WTC11 (cell line): ENCODE measurements at regions of chr2 and their contacts with region 1.

Region 1: DNA sequence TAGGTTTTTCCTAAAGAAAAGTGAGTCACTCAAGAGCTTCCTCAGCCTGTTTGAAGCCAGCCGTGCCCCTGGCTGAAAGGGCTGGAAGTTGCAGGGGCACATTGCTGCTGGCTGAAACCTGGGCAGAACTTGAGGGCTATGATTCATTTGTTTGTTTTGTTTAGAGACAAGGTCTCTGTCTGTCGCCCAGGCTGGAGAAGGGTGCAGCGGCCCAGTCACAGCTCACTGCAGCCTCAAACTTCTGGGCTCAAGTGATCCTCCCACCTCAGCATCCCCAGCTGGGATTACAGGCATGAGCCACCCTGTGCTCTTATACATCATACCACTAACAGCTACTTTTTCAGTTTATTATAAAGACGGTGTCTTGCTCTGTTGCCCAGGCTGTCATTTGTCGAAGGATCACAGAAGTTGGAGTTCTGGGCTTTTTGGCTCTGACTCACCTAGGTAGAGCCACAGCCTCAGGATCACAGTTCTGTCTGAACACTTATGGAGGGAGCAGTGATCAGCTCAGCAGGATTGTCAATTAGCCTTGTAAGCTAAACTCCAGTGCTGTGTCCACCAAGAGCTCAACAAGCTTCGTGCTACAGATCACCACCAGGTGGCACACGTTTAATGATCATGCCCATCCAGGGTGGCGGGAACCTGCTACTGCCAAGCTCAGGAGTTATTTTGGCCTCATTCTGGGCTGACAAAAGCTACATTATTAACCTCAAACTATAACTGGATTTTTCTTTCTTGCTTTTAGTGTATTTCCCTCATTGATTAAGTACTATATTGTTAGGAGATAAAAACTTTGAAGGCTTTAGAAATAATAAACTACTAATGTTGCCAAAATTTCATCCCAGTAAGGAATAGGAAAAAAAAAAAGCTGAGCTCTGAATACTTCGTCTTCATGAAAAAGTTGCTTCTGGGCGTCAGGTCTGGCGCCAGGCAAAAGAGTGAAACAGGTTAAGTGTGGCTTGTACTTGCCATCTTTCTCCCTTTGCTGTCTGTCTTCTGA is 57.9 kb downstream of the ARHGEF33 start:
- DNase-seq: peak; percentile 82
- ATAC-seq: peak; percentile 92
- H3K4me3 Mint-ChIP-seq: no peak overlapping the region
- H3K27ac Mint-ChIP-seq: no peak overlapping the region
- H3K4me1 Mint-ChIP-seq: peaks cover 31% of the 10 kb centered on the region
- H3K27me3 Mint-ChIP-seq: peaks cover 2% of the 10 kb centered on the region; the same call in 1 of the 2 replicates
- CTCF ChIP-seq: peak; percentile 53

Region 2: DNA sequence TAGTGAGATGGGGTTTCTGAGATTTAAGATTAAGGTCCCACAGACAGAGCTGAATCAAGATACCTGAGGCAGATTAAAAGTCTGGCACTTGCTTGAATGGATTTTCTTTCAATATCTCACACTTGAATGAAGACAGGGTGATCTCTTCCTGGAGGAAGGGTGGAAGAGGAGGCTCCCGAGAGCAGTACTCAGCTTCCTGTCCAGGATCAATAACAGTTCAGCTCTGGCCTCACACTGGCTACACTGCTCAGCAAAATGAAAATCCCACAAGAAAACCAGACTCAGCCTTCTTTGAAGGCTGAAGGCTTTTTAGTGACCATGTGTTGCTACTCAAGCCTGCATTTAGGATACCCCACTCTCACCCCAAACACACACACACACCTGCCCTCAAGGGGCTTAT is 46.8 kb before region 1 on chr2:
- CTCF ChIA-PET with region 1: interaction called, 10 read pairs
- POLR2A ChIA-PET with region 1: no interaction called
- DNase-seq: no peak
- ATAC-seq: no peak
- H3K4me3 Mint-ChIP-seq: no peak overlapping the region
- H3K27ac Mint-ChIP-seq: no peak overlapping the region
- H3K4me1 Mint-ChIP-seq: no peaks in the 10 kb centered on the region
- H3K27me3 Mint-ChIP-seq: no peaks in the 10 kb centered on the region
- CTCF ChIP-seq: no peak

Region 3: DNA sequence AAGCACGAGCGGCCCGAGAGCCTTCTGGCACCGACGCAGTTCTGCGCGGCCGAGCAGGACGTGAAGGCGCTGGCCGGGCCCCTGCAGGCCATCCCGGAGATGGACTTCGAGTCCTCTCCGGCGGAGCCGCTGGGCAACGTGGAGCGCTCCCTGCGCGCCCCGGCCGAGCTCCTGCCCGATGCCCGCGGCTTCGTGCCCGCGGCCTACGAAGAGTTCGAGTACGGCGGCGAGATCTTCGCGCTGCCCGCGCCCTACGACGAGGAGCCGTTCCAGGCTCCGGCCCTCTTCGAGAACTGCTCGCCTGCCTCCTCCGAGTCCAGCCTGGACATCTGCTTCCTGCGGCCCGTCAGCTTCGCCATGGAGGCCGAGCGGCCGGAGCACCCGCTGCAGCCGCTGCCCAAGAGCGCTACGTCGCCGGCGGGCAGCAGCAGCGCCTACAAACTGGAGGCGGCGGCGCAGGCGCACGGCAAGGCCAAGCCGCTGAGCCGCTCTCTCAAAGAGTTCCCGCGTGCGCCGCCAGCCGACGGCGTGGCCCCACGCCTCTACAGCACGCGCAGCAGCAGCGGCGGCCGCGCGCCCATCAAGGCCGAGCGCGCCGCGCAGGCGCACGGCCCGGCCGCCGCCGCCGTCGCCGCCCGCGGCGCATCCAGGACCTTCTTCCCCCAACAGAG is 12.5 kb after region 1 on chr2:
- CTCF ChIA-PET with region 1: interaction called, 44 read pairs
- POLR2A ChIA-PET with region 1: no interaction called
- DNase-seq: peak; percentile 75
- ATAC-seq: peak; percentile 88
- H3K4me3 Mint-ChIP-seq: peak overlapping the region; percentile 51
- H3K27ac Mint-ChIP-seq: no peak overlapping the region
- H3K4me1 Mint-ChIP-seq: peaks cover 5% of the 10 kb centered on the region; the same call in 1 of the 2 replicates
- H3K27me3 Mint-ChIP-seq: peaks cover 54% of the 10 kb centered on the region
- CTCF ChIP-seq: no peak

Region 4: DNA sequence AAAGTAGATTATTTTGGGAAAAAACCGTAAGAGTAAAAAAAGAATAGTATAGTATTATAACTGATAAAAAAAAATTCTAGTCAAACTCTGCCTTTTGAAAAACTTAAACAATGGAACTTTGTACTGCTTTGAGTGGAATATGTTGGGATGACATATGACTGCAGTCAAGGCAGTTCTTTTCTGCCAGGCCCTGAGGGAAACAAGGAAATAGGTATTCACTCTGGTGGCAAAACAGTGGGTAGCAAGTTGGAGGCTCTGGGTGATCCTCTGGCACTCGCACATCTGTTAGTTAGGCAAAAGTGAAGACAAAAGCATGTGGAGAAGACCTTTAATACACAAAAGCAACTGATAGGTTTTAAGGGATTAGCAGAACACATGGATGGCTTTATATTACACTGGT is 44.4 kb after region 1 on chr2:
- CTCF ChIA-PET with region 1: interaction called, 14 read pairs
- POLR2A ChIA-PET with region 1: no interaction called
- DNase-seq: no peak
- ATAC-seq: no peak
- H3K4me3 Mint-ChIP-seq: no peak overlapping the region
- H3K27ac Mint-ChIP-seq: 0 out of 2 replicates have a peak overlapping the region, but pooled peaks have one; percentile 54
- H3K4me1 Mint-ChIP-seq: peaks cover 6% of the 10 kb centered on the region; the same call in 1 of the 2 replicates
- H3K27me3 Mint-ChIP-seq: no peaks in the 10 kb centered on the region
- CTCF ChIP-seq: no peak

Region 5: GRCh38 chr2:39033980-39034379 is 86.4 kb after region 1 on chr2:
- CTCF ChIA-PET with region 1: interaction called, 31 read pairs
- POLR2A ChIA-PET with region 1: no interaction called
- DNase-seq: no peak
- ATAC-seq: no peak
- H3K4me3 Mint-ChIP-seq: no peak overlapping the region
- H3K27ac Mint-ChIP-seq: no peak overlapping the region
- H3K4me1 Mint-ChIP-seq: no peaks in the 10 kb centered on the region
- H3K27me3 Mint-ChIP-seq: no peaks in the 10 kb centered on the region
- CTCF ChIP-seq: no peak

Region 6: GRCh38 chr2:39227628-39228412 is 280.3 kb after region 1 on chr2:
- CTCF ChIA-PET with region 1: interaction called, 121 read pairs
- POLR2A ChIA-PET with region 1: no interaction called
- DNase-seq: peak; percentile 80
- ATAC-seq: peak; percentile 74
- H3K4me3 Mint-ChIP-seq: peak overlapping the region; percentile 67
- H3K27ac Mint-ChIP-seq: peak overlapping the region; percentile 97
- H3K4me1 Mint-ChIP-seq: peaks cover 44% of the 10 kb centered on the region
- H3K27me3 Mint-ChIP-seq: no peaks in the 10 kb centered on the region
- CTCF ChIP-seq: peak; percentile 86